B cell (primary cell): ENCODE measurements at regions of chr5 and their contacts with region 1.

Region 1: GRCh38 chr5:148831590-148832565 is 5.5 kb downstream of the ADRB2 start:
- DNase-seq: peak; percentile 78
- ATAC-seq: peak; percentile 77
- H3K4me3 ChIP-seq: peak overlapping the region in 4 of 5 experiments; percentile 33 to 53 (median 45)
- H3K4me3 Mint-ChIP-seq: peak overlapping the region; percentile 94
- H3K27ac ChIP-seq: peak overlapping the region; percentile 77 to 78
- H3K27ac Mint-ChIP-seq: peak overlapping the region; percentile 98
- H3K4me1 ChIP-seq: peaks cover 97% of the 10 kb centered on the region in 2 donors
- H3K4me1 Mint-ChIP-seq: peaks cover 94% of the 10 kb centered on the region
- H3K27me3 ChIP-seq: no peaks in the 10 kb centered on the region
- H3K27me3 Mint-ChIP-seq: no peaks in the 10 kb centered on the region
- CTCF ChIP-seq: no peak

Region 2: DNA sequence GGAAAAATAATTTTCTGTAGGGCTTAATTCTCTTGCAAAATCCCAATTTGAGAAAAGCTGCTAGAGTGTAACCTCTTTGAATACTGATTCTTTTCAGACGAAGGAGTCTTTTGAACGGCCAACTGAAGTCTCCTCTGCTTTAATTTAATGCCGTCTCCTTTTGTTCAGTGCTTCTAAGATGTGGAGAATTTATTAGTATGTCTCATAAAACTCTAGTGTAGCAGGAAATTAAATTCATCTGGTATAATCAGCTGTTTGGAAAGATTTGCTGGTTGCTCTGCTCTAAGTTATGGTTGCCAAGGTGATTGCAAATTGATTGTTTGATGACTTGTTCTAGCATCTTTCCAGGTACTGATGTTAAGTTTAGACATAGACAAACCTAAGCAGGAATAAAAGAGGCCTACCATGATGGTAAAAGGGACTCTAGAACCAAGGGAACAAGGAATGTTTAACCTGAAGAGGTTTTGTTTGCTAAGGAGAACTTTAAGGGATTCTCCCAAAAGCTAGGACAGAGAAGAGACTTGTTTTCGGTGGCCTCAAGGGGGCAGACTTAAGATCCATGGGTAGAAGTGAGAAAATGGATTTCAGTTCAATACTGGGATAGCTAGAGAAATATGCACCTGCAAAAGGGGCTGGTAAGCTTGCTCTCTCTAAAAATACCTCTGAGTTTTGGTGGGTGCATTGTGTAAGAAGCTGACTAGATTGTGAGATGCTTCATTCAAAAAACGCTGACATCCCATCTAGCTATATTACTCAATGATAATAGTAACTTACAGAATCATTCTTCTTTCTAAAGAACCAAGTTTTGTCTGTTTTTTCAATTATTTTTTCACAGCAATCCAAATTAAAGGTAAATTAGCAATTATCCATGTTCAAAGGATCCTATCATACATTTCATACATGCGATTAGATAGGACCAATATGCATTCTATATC is 11.2 kb before region 1 on chr5:
- CTCF ChIA-PET with region 1: interaction called, 35 read pairs
- POLR2A ChIA-PET with region 1: interaction called, 3 read pairs
- intact Hi-C with region 1: no loop called
- DNase-seq: peak; percentile 41
- ATAC-seq: no peak
- H3K4me3 ChIP-seq: no peak overlapping the region
- H3K4me3 Mint-ChIP-seq: no peak overlapping the region
- H3K27ac ChIP-seq: no peak overlapping the region
- H3K27ac Mint-ChIP-seq: no peak overlapping the region
- H3K4me1 ChIP-seq: peaks cover 33 to 35% of the 10 kb centered on the region in 2 donors
- H3K4me1 Mint-ChIP-seq: peaks cover 60% of the 10 kb centered on the region
- H3K27me3 ChIP-seq: no peaks in the 10 kb centered on the region
- H3K27me3 Mint-ChIP-seq: no peaks in the 10 kb centered on the region
- CTCF ChIP-seq: peak; percentile 67

Region 3: DNA sequence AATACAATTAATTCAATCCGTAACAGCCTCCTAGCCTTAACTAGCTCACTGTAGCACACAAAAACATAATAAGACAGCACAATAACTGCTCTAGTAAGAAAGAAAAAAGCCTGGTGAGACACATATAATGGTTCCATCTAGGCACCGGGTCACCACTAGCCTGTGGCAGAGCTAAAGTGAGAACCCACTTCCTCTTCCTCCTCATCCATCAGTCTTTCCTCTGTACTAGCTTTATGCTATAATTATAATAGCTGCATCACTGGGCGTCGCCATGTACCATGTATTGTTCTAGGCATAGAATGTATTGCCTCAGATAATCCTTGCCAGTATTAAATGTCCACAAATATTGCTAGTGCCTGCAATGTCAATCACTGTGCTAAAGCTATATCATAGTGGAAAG is 17.6 kb after region 1 on chr5:
- CTCF ChIA-PET with region 1: interaction called, 6 read pairs
- POLR2A ChIA-PET with region 1: interaction called, 3 read pairs
- intact Hi-C with region 1: loop called (anchors 2 kb)
- DNase-seq: peak; percentile 32
- ATAC-seq: peak; percentile 70
- H3K4me3 ChIP-seq: peak overlapping the region in 1 of 5 experiments; percentile 11
- H3K4me3 Mint-ChIP-seq: peak overlapping the region; percentile 3
- H3K27ac ChIP-seq: peak overlapping the region; percentile 9 to 29
- H3K27ac Mint-ChIP-seq: peak overlapping the region; percentile 7
- H3K4me1 ChIP-seq: peaks cover 23 to 32% of the 10 kb centered on the region in 2 donors
- H3K4me1 Mint-ChIP-seq: peaks cover 22% of the 10 kb centered on the region
- H3K27me3 ChIP-seq: no peaks in the 10 kb centered on the region
- H3K27me3 Mint-ChIP-seq: no peaks in the 10 kb centered on the region
- CTCF ChIP-seq: no peak

Region 4: GRCh38 chr5:149345147-149345875 is 513.4 kb after region 1 on chr5 and contains the start of gene GRPEL2:
- CTCF ChIA-PET with region 1: no interaction called
- POLR2A ChIA-PET with region 1: no interaction called
- intact Hi-C with region 1: loop called (anchors 10 kb)
- DNase-seq: peak; percentile 88
- ATAC-seq: peak; percentile 90
- H3K4me3 ChIP-seq: peak within 1 kb of the TSS; percentile 62 to 88 (median 77)
- H3K4me3 Mint-ChIP-seq: peak within 1 kb of the TSS; percentile 87
- H3K27ac ChIP-seq: peak within 1 kb of the TSS; percentile 53 to 63
- H3K27ac Mint-ChIP-seq: peak within 1 kb of the TSS; percentile 83
- H3K4me1 ChIP-seq: peaks cover 11 to 22% of the 10 kb centered on the region in 2 donors
- H3K4me1 Mint-ChIP-seq: peaks cover 29% of the 10 kb centered on the region
- H3K27me3 ChIP-seq: no peaks in the 10 kb centered on the region
- H3K27me3 Mint-ChIP-seq: no peaks in the 10 kb centered on the region
- CTCF ChIP-seq: no peak
- total RNA-seq, gene GRPEL2: 12.1 and 12.5 TPM in 2 replicates

Region 5: DNA sequence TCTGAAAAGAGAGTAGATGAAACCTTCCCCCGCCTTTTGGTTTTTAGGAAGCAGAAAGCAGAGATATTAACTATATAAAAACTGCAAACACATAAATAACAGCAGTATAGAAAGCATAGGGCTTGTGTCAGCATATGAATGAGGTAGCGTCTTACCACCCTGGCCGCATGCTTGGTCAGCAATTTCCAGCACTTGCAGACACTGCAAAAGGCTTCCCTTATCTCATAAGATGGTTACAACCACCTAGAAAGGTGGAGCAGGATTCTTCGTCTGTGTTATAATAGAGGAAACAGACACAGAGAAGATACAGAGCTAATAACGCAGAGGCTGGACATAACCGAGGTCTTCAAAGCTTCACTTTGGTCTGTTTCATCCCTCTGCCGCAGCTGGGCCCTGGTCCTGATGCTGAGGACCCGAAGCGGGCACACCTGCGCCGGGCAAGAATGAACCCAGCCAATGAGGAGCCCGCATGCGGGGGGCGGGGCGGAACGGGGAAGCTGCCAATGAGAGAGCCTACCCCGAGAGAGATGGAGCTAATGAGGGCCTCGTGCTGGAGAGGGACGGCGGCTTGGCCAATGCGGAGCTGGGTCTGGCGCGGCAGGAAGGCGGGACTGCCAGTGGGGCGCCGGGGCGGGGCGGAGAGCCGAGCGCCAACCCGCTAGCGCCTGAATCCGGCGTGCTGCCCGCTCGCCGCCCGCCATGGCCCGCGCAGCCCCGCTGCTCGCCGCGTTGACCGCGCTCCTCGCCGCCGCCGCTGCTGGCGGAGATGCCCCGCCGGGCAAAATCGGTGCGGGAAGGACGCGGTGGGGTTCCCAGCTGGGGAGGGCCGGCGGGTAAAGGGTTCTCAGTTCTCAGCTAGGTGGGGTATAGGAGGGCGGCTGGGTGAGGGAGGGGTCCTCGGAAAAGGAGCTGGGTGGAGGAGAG is 525.8 kb after region 1 on chr5 and contains the start of gene PCYOX1L:
- CTCF ChIA-PET with region 1: no interaction called
- POLR2A ChIA-PET with region 1: no interaction called
- intact Hi-C with region 1: no loop called
- DNase-seq: peak; percentile 95
- ATAC-seq: peak; percentile 99
- H3K4me3 ChIP-seq: peak within 1 kb of the TSS; percentile 38 to 82 (median 76)
- H3K4me3 Mint-ChIP-seq: peak within 1 kb of the TSS; percentile 95
- H3K27ac ChIP-seq: peak within 1 kb of the TSS; percentile 38 to 69
- H3K27ac Mint-ChIP-seq: peak within 1 kb of the TSS; percentile 85
- H3K4me1 ChIP-seq: peaks cover 12 to 15% of the 10 kb centered on the region in 2 donors
- H3K4me1 Mint-ChIP-seq: peaks cover 18% of the 10 kb centered on the region
- H3K27me3 ChIP-seq: no peaks in the 10 kb centered on the region
- H3K27me3 Mint-ChIP-seq: no peaks in the 10 kb centered on the region
- CTCF ChIP-seq: no peak
- total RNA-seq, gene PCYOX1L: 11.7 and 13.5 TPM in 2 replicates

Region 6: GRCh38 chr5:149475777-149476176 is 643.9 kb after region 1 on chr5:
- CTCF ChIA-PET with region 1: no interaction called
- POLR2A ChIA-PET with region 1: no interaction called
- intact Hi-C with region 1: no loop called
- DNase-seq: no peak
- ATAC-seq: no peak
- H3K4me3 ChIP-seq: no peak overlapping the region
- H3K4me3 Mint-ChIP-seq: no peak overlapping the region
- H3K27ac ChIP-seq: no peak overlapping the region
- H3K27ac Mint-ChIP-seq: no peak overlapping the region
- H3K4me1 ChIP-seq: no peaks in the 10 kb centered on the region
- H3K4me1 Mint-ChIP-seq: no peaks in the 10 kb centered on the region
- H3K27me3 ChIP-seq: no peaks in the 10 kb centered on the region
- H3K27me3 Mint-ChIP-seq: peaks cover 12% of the 10 kb centered on the region
- CTCF ChIP-seq: no peak